ENCODE measurements at regions of chr1 and their contacts with region 1.

Region 1: GRCh38 chr1:110630839-110631663 is 24.9 kb upstream of the KCNA2 start:
- DNase-seq: peak; percentile 81
- H3K4me3 Mint-ChIP-seq: no peak overlapping the region
- H3K27ac Mint-ChIP-seq: no peak overlapping the region
- H3K4me1 Mint-ChIP-seq: peaks cover 58% of the 10 kb centered on the region
- H3K27me3 Mint-ChIP-seq: no peaks in the 10 kb centered on the region

Region 2: GRCh38 chr1:110645821-110646735 is 15.0 kb after region 1 on chr1:
- intact Hi-C with region 1: loop called (anchors 1 kb)
- DNase-seq: no peak
- H3K4me3 Mint-ChIP-seq: peak overlapping the region; percentile 49
- H3K27ac Mint-ChIP-seq: peak overlapping the region; percentile 77
- H3K4me1 Mint-ChIP-seq: peaks cover 53% of the 10 kb centered on the region
- H3K27me3 Mint-ChIP-seq: no peaks in the 10 kb centered on the region

Region 3: DNA sequence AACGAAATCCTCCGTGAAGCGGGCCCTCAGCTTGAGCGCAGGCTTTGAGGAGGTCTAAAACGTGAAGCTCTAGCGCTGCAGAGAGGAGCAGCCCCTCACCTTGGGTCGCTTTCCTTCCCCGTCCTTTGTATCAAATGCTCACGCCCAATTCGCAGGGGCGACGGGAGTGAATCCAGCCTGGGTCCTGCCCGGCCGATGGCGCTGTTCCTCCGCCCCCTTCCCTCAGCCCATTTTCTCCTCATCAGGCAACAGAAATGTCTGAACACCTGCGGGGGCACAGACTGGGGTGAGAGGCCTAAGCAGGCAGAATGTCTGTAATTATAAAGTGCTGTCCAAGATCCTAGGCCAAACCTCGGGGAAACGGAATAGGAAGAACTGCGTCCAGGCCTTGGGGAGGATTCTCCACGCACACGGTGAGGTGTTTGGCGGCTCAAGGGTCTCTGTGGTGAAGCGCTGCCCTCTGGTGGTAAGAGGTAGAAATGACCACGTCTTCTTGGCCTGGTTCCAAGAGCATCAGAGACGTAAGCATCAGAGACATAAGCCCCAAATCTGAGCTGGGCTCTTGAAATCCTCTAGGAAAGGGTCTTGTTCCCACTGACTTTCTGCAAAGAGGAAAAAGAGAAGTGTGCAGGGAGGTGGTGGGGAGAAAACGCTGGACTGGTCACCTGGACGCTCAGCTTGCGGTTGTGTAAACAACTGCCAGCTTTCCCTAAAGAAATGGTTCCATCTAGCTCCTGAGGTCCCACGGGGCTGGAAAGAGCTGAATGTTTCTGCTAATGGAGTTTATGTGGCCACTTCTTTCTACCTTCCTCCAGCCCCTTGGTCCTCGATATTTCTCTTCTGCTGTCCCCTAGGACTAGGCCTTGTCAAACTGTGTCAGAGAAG is 149.8 kb after region 1 on chr1:
- intact Hi-C with region 1: loop called (anchors 5 kb)
- DNase-seq: peak; percentile 67
- H3K4me3 Mint-ChIP-seq: no peak overlapping the region
- H3K27ac Mint-ChIP-seq: no peak overlapping the region
- H3K4me1 Mint-ChIP-seq: peaks cover 24% of the 10 kb centered on the region
- H3K27me3 Mint-ChIP-seq: peaks cover 15% of the 10 kb centered on the region

Region 4: GRCh38 chr1:110963691-110964399 is 332.8 kb after region 1 on chr1 and contains the start of gene LRIF1:
- intact Hi-C with region 1: loop called (anchors 10 kb)
- DNase-seq: peak; percentile 100
- H3K4me3 Mint-ChIP-seq: peak within 1 kb of the TSS; percentile 89
- H3K27ac Mint-ChIP-seq: peak within 1 kb of the TSS; percentile 95
- H3K4me1 Mint-ChIP-seq: peaks cover 36% of the 10 kb centered on the region
- H3K27me3 Mint-ChIP-seq: peaks cover 13% of the 10 kb centered on the region
- total RNA-seq, gene LRIF1: 15.2 and 15.7 TPM in 2 replicates

Region 5: GRCh38 chr1:111481387-111482221 is 850.6 kb after region 1 on chr1:
- intact Hi-C with region 1: loop called (anchors 10 kb)
- DNase-seq: peak; percentile 42
- H3K4me3 Mint-ChIP-seq: no peak overlapping the region
- H3K27ac Mint-ChIP-seq: no peak overlapping the region
- H3K4me1 Mint-ChIP-seq: peaks cover 27% of the 10 kb centered on the region
- H3K27me3 Mint-ChIP-seq: peaks cover 9% of the 10 kb centered on the region